ENCODE measurements at regions of chr7 and their contacts with region 1.

Region 1: DNA sequence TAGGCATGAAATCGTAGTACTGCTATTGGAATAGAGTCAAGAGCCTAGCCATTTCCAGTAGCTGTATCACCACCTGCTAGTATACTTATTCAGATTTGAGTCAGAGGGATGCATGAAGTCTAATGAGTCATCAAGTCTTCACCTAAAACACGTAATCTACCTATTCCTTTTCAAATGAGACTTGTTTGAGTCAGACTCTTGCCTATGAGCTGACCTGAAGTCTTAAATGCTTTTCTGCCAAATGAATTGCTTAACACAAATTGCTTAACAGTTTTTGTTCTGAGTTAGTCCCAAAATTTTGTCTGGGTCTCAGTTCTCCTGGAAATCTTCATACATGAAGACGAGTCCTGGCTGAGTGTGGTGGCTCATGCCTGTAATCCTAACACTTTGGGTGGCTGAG is 165.2 kb downstream of the GNAT3 start:
- DNase-seq: peak; percentile 6
- H3K4me3 Mint-ChIP-seq: no peak overlapping the region
- H3K27ac Mint-ChIP-seq: peak overlapping the region; percentile 54
- H3K4me1 Mint-ChIP-seq: peaks cover 13% of the 10 kb centered on the region
- H3K27me3 Mint-ChIP-seq: peaks cover 5% of the 10 kb centered on the region

Region 2: DNA sequence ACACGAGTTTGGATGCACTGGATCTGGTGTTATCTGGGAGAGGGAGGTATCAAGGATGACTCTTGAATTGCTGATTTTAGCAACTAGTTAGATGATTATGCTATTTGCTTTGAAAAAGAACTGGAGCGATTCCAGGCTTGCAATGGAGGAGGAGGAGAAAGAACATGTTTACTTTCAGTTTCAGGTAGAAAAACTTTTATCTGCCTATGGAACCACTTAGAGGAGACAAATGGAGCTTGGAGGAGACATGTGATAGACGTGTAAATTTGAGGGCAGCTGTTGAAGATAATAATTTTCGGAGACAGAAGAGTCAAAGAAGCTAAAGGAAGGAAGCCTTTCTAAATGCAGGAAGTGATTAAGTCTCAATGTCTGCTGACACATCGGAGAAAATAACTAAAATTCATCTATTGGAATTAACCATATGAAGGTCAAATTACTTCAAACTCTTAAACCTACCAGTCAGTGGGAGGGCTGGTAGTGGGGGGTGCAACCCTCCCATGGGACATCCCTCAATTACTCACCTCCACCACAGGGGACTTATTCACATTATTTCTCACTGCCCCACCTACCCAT is 268.5 kb before region 1 on chr7:
- CTCF ChIA-PET with region 1: no interaction called
- intact Hi-C with region 1: loop called (anchors 5 kb)
- DNase-seq: peak; percentile 32
- H3K4me3 Mint-ChIP-seq: peak overlapping the region; percentile 61
- H3K27ac Mint-ChIP-seq: peak overlapping the region; percentile 23
- H3K4me1 Mint-ChIP-seq: peaks cover 13% of the 10 kb centered on the region
- H3K27me3 Mint-ChIP-seq: no peaks in the 10 kb centered on the region

Region 3: DNA sequence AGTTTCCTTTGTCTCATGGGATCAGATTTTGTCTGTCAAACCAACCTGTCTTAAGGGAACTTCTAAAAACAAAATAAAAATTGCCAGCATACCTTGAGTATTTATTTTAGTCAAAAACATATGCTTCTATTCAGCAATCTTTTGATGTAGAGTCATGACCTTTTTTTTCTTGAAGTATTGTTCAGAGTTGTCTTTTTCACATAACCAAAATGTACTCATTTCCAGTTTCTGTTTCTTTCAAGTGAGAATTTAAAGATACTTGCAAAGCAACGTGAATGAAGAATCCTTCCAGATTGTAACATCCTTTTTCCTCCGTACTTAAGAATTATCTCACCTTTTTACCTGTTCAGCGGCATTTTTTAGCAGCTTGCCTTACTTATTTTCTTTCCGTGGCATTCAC is 174.3 kb before region 1 on chr7:
- CTCF ChIA-PET with region 1: no interaction called
- intact Hi-C with region 1: loop called (anchors 1 kb)
- DNase-seq: no peak
- H3K4me3 Mint-ChIP-seq: peak overlapping the region; percentile 24
- H3K27ac Mint-ChIP-seq: no peak overlapping the region
- H3K4me1 Mint-ChIP-seq: peaks cover 33% of the 10 kb centered on the region
- H3K27me3 Mint-ChIP-seq: peaks cover 8% of the 10 kb centered on the region

Region 4: DNA sequence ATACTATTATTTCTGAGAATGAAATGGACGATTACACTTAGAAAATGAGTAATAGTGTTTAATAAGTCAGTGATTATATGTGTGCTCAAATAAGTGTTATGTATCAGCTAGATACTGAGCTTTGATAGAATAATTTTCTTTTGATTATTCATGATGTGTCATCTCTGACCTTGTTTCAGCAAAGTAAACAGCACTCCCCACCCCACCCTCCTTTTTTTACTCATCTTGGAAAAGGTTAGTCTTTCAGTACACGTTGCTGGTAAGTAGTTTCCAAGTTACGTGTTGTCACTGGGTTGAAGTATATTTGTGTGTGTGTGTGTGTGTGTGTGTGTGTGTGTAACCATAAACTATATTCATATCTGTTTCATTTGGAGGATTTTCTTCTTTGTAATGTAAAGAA is 128.0 kb before region 1 on chr7:
- CTCF ChIA-PET with region 1: no interaction called
- intact Hi-C with region 1: loop called (anchors 1 kb)
- DNase-seq: peak; percentile 18
- H3K4me3 Mint-ChIP-seq: no peak overlapping the region
- H3K27ac Mint-ChIP-seq: no peak overlapping the region
- H3K4me1 Mint-ChIP-seq: peaks cover 7% of the 10 kb centered on the region
- H3K27me3 Mint-ChIP-seq: peaks cover under 1% of the 10 kb centered on the region

Region 5: DNA sequence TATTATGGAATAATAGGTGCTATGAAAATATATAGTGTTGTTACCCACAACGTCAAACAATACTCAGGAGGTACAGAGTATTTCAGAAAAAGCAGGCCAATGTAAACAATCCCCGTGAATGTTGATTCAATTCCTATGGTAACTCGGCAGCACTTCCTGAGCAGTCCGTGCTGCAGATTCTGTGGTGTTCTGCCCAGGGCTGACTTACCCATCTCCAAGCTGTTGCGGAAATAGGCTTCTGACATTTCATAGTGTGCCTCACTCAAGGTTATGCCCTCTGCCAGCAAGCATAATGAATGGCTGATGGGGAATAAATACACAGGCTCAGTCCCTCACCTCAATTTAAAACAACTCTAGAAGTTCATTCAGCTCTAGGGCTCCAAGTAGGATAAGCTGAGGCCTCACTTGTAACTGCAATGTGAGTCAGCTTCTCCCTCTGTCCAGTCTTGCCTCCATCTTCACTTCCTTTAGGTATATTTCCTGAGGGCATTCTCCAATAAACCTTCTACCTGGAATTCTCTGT is 34.5 kb before region 1 on chr7:
- CTCF ChIA-PET with region 1: no interaction called
- intact Hi-C with region 1: loop called (anchors 1 kb)
- DNase-seq: peak; percentile 49
- H3K4me3 Mint-ChIP-seq: peak overlapping the region; percentile 16
- H3K27ac Mint-ChIP-seq: peak overlapping the region; percentile 38
- H3K4me1 Mint-ChIP-seq: peaks cover 30% of the 10 kb centered on the region
- H3K27me3 Mint-ChIP-seq: no peaks in the 10 kb centered on the region

Region 6: GRCh38 chr7:80379034-80379982 is 32.6 kb after region 1 on chr7:
- CTCF ChIA-PET with region 1: no interaction called
- intact Hi-C with region 1: no loop called
- DNase-seq: no peak
- H3K4me3 Mint-ChIP-seq: no peak overlapping the region
- H3K27ac Mint-ChIP-seq: no peak overlapping the region
- H3K4me1 Mint-ChIP-seq: no peaks in the 10 kb centered on the region
- H3K27me3 Mint-ChIP-seq: no peaks in the 10 kb centered on the region

Measured in activated naive CD4-positive, alpha-beta T cell treated with anti-CD3 and anti-CD28 coated beads for 36 hours (primary cell).